ENCODE measurements at regions of chr18 and their contacts with region 1.

Region 1: GRCh38 chr18:76405681-76406356 is 89.2 kb downstream of the ZNF516 start:
- DNase-seq: peak; percentile 72
- ATAC-seq: no peak
- H3K4me3 Mint-ChIP-seq: no peak overlapping the region
- H3K27ac Mint-ChIP-seq: no peak overlapping the region
- H3K4me1 Mint-ChIP-seq: peaks cover 11% of the 10 kb centered on the region
- H3K27me3 Mint-ChIP-seq: no peaks in the 10 kb centered on the region

Region 2: GRCh38 chr18:76426737-76427305 is 21.0 kb after region 1 on chr18:
- CTCF ChIA-PET with region 1: interaction called, 3 read pairs
- POLR2A ChIA-PET with region 1: no interaction called
- intact Hi-C with region 1: loop called (anchors 1 kb)
- DNase-seq: peak; percentile 46
- ATAC-seq: peak; percentile 44
- H3K4me3 Mint-ChIP-seq: no peak overlapping the region
- H3K27ac Mint-ChIP-seq: no peak overlapping the region
- H3K4me1 Mint-ChIP-seq: peaks cover 6% of the 10 kb centered on the region
- H3K27me3 Mint-ChIP-seq: no peaks in the 10 kb centered on the region

Region 3: DNA sequence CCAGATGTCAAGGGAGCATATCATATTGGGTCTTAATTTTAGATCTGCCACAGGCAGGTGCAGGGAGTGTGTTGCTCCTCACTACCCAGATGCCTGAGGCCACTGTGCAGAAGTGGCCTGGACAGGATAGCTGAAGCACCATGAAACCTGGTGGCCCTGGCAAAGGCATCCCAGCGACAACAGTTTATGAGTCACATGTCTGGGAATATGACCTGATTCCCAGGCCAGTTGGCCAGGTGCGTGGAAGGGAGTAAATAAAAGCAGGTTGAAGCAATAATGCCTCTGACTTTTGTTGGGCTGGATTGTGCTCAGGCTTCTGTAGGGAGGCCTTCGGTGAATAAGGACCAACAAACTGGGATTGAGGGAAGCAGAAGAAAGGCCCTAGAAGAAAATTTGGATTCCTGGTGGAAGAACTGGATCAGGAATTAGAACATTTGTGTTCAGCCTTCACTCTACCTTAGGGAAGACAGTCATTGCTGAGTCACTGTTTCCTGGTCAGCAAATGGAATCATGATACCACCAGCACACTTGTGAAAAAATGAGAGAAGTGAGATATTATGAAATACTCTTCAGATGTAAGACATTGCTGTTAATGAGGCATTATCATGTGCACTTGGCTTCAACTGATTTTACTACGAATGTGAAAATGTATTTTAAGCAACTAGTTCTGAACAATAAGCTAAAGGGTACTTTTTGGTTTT is 167.7 kb after region 1 on chr18:
- CTCF ChIA-PET with region 1: no interaction called
- POLR2A ChIA-PET with region 1: no interaction called
- intact Hi-C with region 1: loop called in 1 of 2 experiments (anchors 5 kb)
- DNase-seq: no peak
- ATAC-seq: no peak
- H3K4me3 Mint-ChIP-seq: no peak overlapping the region
- H3K27ac Mint-ChIP-seq: no peak overlapping the region
- H3K4me1 Mint-ChIP-seq: no peaks in the 10 kb centered on the region
- H3K27me3 Mint-ChIP-seq: peaks cover 10% of the 10 kb centered on the region